ENCODE measurements at regions of chr1 and their contacts with region 1.

Region 1: GRCh38 chr1:226634166-226634588 is 85.6 kb downstream of the STUM start:
- DNase-seq: peak; percentile 88
- ATAC-seq: peak; percentile 82 to 86

Region 2: DNA sequence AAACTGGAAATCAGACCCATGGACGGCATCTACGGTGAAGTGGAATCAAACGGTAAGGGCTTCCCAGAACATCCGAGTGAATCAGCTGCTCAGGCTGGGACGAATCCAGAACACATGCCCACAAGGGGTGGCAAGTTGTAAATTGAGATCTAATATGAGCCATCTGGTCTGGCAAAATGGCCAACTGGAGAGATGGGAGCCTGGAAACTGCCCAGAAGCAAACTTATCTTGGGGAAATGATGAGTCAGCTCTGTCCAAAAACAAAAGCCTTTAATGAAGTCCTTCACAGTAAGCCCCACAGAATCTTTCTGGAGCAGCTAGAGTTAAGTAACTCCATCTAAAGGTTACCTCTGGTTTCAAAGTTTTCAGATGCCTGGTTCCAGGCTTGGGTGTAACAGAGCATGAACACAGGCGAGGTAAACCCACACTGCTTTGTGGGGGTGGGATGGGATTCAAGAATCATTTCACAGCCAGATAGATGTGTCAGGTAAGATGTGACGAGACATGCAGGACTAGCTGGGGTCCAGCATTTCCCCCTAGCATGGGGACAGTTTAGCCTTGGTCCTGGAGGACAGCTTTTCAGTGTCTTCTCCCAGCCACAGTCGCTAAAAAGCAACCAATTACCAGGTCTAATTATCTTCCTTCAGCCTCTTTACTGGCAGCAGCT is 867.1 kb before region 1 on chr1:
- intact Hi-C with region 1: no loop called
- DNase-seq: peak; percentile 73
- ATAC-seq: peak; percentile 64 to 68

Region 3: DNA sequence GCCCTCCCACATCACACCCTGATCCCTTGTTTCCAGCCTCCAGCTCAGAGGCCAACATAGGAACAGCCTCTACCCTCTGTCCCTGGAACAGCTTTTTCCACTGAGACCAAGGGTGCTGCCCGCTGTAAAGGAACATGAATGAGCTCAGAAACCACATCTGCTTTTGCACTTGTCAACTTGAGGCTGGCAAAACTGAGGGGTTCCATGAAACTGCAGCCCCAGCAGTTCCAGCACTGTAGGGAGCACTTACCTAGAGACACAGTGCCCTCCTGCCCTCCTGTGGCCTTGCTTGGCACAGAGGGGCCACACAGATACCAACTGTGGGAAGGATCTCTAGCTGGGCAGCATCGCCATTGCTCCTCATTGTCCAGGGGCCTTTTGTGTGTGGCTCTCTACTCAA is 53.2 kb after region 1 on chr1:
- intact Hi-C with region 1: loop called (anchors 2 to 5 kb)
- DNase-seq: no peak
- ATAC-seq: peak; percentile 31 to 36

Region 4: DNA sequence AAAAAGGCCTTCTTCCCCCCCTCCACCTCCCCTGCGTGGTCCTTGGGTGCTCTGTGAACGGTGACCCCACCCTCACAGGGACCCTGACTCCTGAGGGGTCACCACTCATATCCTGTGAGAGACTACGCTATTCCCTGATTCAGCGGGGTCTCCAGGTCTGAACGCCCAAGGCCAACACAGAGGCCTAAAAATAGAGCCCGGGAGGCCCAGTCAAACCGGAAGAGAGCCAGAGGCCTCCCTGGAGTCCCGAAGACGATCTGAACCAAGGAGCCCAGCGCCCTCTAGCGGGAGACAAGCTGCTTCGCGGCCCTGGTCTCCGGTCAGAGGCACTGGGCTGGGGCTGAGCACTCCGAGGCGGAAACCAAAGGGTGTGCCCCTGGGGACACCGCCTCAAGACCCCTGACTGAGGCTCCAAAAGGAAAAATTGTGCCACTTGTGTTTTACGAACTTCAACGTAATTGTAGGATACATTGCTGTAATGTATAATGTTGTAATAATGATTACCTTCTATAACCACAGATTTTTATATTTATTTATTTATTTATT is 193.9 kb after region 1 on chr1:
- intact Hi-C with region 1: loop called (anchors 1 to 5 kb)
- DNase-seq: peak; percentile 97
- ATAC-seq: peak; percentile 98 to 99